Dorsolateral prefrontal cortex (tissue), 120 donors: ENCODE measurements at regions of chr15 and their contacts with region 1.

Region 1: DNA sequence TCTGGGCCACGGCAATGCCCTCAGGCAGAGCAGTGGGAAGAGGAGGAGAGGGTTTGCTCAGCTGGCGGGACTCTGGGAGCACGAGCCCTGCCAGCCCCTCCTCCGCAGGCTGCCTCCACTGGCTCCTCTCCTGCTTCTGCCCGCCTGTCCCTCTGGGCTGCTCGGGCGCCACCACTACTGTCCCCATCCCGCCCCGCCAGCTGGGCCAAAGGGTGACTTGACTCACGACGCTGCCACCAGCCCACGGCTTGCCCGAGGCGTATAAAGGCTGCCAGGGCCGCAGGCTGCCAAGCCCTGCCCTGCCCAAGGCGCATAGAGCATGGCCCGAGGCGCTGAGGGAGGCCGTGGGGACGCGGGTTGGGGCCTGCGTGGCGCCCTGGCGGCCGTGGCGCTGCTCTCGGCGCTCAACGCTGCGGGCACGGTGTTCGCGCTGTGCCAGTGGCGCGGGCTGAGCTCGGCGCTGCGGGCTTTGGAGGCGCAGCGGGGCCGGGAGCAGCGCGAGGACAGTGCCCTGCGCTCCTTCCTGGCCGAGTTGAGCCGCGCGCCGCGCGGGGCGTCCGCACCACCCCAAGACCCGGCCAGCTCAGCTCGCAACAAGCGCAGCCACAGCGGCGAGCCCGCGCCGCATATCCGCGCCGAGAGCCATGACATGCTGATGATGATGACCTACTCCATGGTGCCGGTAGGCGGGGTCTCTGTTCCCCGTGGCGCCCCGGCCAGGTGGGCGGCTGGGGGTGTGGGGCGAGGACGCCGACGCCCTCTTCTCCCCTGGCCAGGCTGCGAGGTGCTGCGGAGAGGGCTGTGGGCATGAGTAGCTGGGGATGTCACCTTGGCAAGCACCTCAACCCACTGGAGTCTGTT is at the start of gene GLDN:
- DNase-seq: peak; percentile 26 to 91 (median 84)
- H3K4me3 ChIP-seq: peak within 1 kb of the TSS; percentile 39 to 84 (median 71)
- H3K27ac ChIP-seq: peak within 1 kb of the TSS; percentile 60 to 99 (median 94)
- H3K27me3 ChIP-seq: no peaks in the 10 kb centered on the region
- CTCF ChIP-seq: peak in 29 of 56 donors; percentile 4 to 62 (median 14)
- total RNA-seq, gene GLDN: 10.0 to 223 (median 46.3) TPM

Region 2: DNA sequence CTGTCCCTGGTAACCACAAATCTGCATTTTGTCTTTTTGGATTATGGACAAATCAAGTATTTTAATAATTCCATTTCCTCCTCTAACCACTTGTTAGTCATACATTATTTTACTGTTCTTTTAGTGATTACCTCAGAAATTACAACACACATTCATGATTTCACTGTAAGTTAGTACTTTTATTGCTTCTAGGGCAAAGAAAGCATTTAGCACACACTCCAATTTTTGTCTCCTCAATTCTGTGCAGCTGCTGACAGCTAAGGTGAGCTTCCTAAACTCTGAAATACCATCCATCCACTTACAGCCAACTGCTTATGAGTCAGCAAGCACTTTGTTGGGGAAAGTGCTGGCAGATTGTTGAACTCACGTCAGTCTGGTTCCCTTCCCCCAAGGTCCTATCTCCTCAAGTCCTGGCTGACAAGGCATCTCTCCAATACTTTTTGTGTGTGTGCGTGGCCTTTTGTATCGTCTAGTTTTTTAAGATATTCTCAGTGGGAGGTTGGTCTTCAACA is 197.5 kb before region 1 on chr15:
- intact Hi-C with region 1: no loop called
- DNase-seq: no peak
- H3K4me3 ChIP-seq: no peak overlapping the region
- H3K27ac ChIP-seq: no peak overlapping the region
- H3K27me3 ChIP-seq: no peaks in the 10 kb centered on the region
- CTCF ChIP-seq: no peak

Region 3: GRCh38 chr15:51212909-51213308 is 128.7 kb before region 1 on chr15:
- intact Hi-C with region 1: no loop called
- DNase-seq: no peak
- H3K4me3 ChIP-seq: no peak overlapping the region
- H3K27ac ChIP-seq: no peak overlapping the region
- H3K27me3 ChIP-seq: no peaks in the 10 kb centered on the region
- CTCF ChIP-seq: no peak

Region 4: GRCh38 chr15:51223782-51224229 is 117.8 kb before region 1 on chr15:
- intact Hi-C with region 1: no loop called
- DNase-seq: no peak
- H3K4me3 ChIP-seq: no peak overlapping the region
- H3K27ac ChIP-seq: peak overlapping the region in 1 of 59 donors; percentile 36
- H3K27me3 ChIP-seq: no peaks in the 10 kb centered on the region
- CTCF ChIP-seq: no peak

Region 5: DNA sequence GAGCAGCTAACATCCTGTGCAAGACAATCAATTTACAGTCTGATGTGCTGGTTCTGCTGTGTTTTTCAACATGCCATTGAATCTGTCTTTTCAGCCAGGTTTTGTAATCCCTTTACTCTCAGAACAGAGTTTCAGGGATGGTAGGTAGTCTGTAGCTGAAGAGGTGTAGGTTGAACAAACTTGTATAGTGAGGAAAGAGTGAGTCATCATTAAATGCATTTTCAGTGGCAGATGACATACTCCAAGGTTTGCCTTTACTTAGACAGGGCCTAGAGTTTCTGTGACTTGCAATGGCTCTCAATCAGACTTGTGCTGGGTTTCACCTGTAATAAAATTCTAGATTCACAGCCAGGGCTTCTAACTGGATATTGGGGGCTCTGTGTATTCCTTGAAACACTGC is 97.8 kb before region 1 on chr15:
- intact Hi-C with region 1: no loop called
- DNase-seq: no peak
- H3K4me3 ChIP-seq: no peak overlapping the region
- H3K27ac ChIP-seq: no peak overlapping the region
- H3K27me3 ChIP-seq: peaks cover 0 to 17% (median 0%) of the 10 kb centered on the region in 45 donors
- CTCF ChIP-seq: no peak

Region 6: DNA sequence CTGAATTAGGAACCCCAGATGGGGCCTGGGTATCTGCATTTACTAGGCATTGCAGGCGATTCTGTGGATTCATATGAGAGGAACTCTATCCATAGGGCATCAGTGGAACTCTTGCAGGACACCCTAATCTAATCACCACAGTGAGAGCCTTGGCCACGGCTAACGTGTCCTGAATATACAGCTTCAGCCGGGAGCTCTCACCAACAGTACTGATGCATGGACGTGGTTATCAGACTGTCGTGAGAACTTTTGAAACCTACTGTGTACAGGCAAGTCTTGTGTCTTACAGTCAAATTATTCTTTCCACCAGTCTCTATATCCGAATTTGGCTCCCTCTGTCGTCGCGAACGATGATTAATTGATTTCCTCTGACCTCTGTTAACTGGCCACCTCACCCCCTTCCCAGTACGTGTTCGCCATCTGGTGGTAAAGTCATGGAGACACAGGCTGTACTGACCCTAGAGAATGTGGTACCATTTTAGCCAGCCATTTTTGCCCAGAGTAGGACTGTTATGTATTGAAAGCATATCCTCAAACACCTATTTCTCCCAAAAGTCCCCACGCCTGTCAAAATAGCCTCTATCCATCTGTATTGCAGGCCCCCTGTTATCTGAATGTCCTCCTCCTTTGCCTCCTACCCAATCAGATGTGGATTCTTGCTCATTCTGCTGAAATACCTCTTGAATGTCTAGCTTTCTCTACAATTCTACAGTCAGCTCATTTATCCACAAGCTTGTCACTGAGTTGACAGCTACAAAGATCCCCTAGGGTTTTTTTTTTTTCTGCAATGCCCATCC is 39.6 kb after region 1 on chr15:
- intact Hi-C with region 1: loop called (anchors 2 to 5 kb)
- DNase-seq: peak; percentile 33 to 78 (median 61)
- H3K4me3 ChIP-seq: peak overlapping the region in 6 of 59 donors; percentile 13 to 34 (median 20)
- H3K27ac ChIP-seq: peak overlapping the region in 51 of 59 donors; percentile 4 to 97 (median 84)
- H3K27me3 ChIP-seq: no peaks in the 10 kb centered on the region
- CTCF ChIP-seq: peak; percentile 51 to 99 (median 93)